CD8-positive, alpha-beta T cell (primary cell): ENCODE measurements at regions of chr7 and their contacts with region 1.

Region 1: GRCh38 chr7:151782598-151783448 is 94.1 kb downstream of the PRKAG2 start:
- DNase-seq: peak; percentile 50 to 85 (median 74)
- ATAC-seq: peak; percentile 89
- H3K4me3 ChIP-seq: peak overlapping the region; percentile 44 to 55
- H3K4me3 Mint-ChIP-seq: peak overlapping the region; percentile 87
- H3K27ac ChIP-seq: peak overlapping the region; percentile 29 to 49
- H3K27ac Mint-ChIP-seq: peak overlapping the region; percentile 93
- H3K4me1 ChIP-seq: peaks cover 12% of the 10 kb centered on the region
- H3K4me1 Mint-ChIP-seq: peaks cover 11% of the 10 kb centered on the region
- H3K27me3 ChIP-seq: no peaks in the 10 kb centered on the region
- H3K27me3 Mint-ChIP-seq: no peaks in the 10 kb centered on the region
- CTCF ChIP-seq: peak; percentile 84

Region 2: GRCh38 chr7:151626422-151627115 is 156.3 kb before region 1 on chr7:
- CTCF ChIA-PET with region 1: interaction called, 8 read pairs
- POLR2A ChIA-PET with region 1: interaction called, 7 read pairs
- intact Hi-C with region 1: loop called (anchors 1 to 5 kb)
- DNase-seq: peak in 6 of 9 experiments; percentile 11 to 59 (median 38)
- ATAC-seq: peak; percentile 63
- H3K4me3 ChIP-seq: no peak overlapping the region
- H3K4me3 Mint-ChIP-seq: no peak overlapping the region
- H3K27ac ChIP-seq: no peak overlapping the region
- H3K27ac Mint-ChIP-seq: no peak overlapping the region
- H3K4me1 ChIP-seq: peaks cover 12% of the 10 kb centered on the region
- H3K4me1 Mint-ChIP-seq: peaks cover 61% of the 10 kb centered on the region
- H3K27me3 ChIP-seq: no peaks in the 10 kb centered on the region
- H3K27me3 Mint-ChIP-seq: no peaks in the 10 kb centered on the region
- CTCF ChIP-seq: peak; percentile 22

Region 3: DNA sequence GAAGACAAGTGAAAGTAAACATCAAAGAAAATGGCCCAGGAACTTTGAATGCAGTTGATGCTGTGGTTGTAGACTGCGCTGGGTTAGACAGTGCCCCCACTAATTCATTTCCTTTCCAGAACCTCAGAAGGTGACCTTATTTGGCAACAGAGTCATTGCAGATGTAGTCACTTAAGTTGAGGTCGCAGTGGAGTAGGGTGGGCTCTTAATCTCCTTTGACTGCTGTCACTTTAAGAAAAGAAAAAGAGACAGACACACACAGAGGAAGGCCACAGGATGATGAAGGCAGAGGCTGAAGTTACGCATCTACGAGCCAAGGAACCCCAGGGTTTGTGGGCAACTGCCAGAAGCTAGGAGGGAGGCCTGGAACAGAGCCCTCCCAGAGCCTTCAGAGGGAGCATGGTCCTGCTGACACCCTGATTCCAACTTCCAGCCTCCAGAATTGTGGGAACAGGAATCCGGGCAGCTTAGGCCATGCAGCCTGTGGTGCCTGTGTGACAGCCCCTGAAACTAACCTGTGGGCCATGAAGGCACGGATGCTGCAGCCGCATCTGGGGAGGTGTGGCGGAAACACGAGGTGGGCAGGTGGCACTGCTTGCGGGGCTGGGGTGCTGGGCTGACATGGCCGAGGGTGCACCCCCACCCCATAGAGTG is 13.5 kb before region 1 on chr7:
- CTCF ChIA-PET with region 1: interaction called, 27 read pairs
- POLR2A ChIA-PET with region 1: interaction called, 4 read pairs
- intact Hi-C with region 1: loop called in 1 of 2 experiments (anchors 1 kb)
- DNase-seq: peak in 8 of 9 experiments; percentile 21 to 90 (median 62)
- ATAC-seq: peak; percentile 93
- H3K4me3 ChIP-seq: peak overlapping the region; percentile 42 to 51
- H3K4me3 Mint-ChIP-seq: peak overlapping the region; percentile 77
- H3K27ac ChIP-seq: peak overlapping the region; percentile 63 to 78
- H3K27ac Mint-ChIP-seq: peak overlapping the region; percentile 96
- H3K4me1 ChIP-seq: peaks cover 67% of the 10 kb centered on the region
- H3K4me1 Mint-ChIP-seq: peaks cover 74% of the 10 kb centered on the region
- H3K27me3 ChIP-seq: no peaks in the 10 kb centered on the region
- H3K27me3 Mint-ChIP-seq: no peaks in the 10 kb centered on the region
- CTCF ChIP-seq: no peak

Region 4: GRCh38 chr7:151936207-151936606 is 153.4 kb after region 1 on chr7:
- CTCF ChIA-PET with region 1: interaction called, 11 read pairs
- POLR2A ChIA-PET with region 1: no interaction called
- intact Hi-C with region 1: loop called in 1 of 2 experiments (anchors 1 kb)
- DNase-seq: peak in 2 of 9 experiments; percentile 61 to 81
- ATAC-seq: peak; percentile 91
- H3K4me3 ChIP-seq: peak overlapping the region; percentile 4 to 24
- H3K4me3 Mint-ChIP-seq: peak overlapping the region; percentile 80
- H3K27ac ChIP-seq: peak overlapping the region; percentile 54 to 77
- H3K27ac Mint-ChIP-seq: peak overlapping the region; percentile 96
- H3K4me1 ChIP-seq: peaks cover 15% of the 10 kb centered on the region
- H3K4me1 Mint-ChIP-seq: peaks cover 17% of the 10 kb centered on the region
- H3K27me3 ChIP-seq: peaks cover 0 to 3% of the 10 kb centered on the region in 2 experiments
- H3K27me3 Mint-ChIP-seq: no peaks in the 10 kb centered on the region
- CTCF ChIP-seq: no peak

Region 5: DNA sequence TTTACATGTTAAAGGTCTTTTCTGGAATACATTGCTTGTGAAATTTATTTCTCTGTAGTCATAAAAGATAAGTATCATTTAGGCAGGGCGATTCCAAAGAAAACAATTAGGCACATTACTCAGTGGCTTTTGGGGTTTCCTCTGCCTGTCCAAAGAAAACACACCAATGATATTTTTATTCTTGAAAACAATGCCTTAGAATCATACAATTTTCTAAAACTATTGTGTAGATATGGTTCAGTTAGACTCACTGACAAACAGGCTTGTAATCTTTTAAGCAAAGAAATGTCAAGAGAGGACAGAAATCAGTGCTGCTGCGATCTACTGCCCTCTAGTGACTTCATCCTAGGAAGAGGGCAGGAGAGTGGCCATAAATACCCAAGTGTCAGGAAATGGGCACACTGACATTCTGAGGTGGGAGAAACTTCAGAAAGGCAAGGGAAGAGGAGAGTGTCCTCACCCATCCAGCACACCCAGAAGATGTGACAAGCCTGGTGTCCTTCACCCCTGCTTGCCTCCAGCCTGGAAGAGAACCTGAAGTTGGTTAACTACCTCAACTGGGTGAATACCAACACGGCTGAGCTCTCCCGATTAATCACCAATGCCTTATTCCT is 363.1 kb after region 1 on chr7:
- CTCF ChIA-PET with region 1: interaction called, 3 read pairs
- POLR2A ChIA-PET with region 1: no interaction called
- intact Hi-C with region 1: loop called in 1 of 2 experiments (anchors 1 kb)
- DNase-seq: peak in 7 of 9 experiments; percentile 11 to 65 (median 43)
- ATAC-seq: peak; percentile 46
- H3K4me3 ChIP-seq: no peak overlapping the region
- H3K4me3 Mint-ChIP-seq: no peak overlapping the region
- H3K27ac ChIP-seq: peak overlapping the region in 1 of 2 experiments; percentile 61
- H3K27ac Mint-ChIP-seq: peak overlapping the region; percentile 91
- H3K4me1 ChIP-seq: peaks cover 47% of the 10 kb centered on the region
- H3K4me1 Mint-ChIP-seq: peaks cover 46% of the 10 kb centered on the region
- H3K27me3 ChIP-seq: no peaks in the 10 kb centered on the region
- H3K27me3 Mint-ChIP-seq: no peaks in the 10 kb centered on the region
- CTCF ChIP-seq: peak; percentile 53